ENCODE measurements at regions of chr6 and their contacts with region 1.

Region 1: DNA sequence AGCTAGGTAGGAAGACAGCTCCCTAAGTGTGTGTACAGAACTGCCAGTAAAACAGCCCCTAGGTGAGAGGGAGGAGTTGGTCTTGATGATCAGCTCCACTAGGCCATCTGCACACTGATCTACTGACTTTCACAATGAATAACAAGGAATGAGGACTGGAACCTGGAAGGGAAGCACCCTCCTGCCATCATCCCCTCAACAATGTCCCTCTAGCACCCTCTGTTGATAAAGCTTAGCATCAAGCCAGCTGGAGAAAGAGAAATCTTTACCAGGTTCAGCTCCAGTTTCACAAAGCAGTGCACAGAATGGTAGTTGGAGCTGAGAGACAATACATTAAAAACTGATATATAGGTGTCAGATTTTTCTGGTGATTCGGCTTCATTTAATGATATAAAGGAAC is 57.2 kb upstream of the IRAK1BP1 start:
- DNase-seq: peak in 1 of 2 experiments; percentile 22
- H3K4me3 ChIP-seq: no peak overlapping the region
- H3K27ac ChIP-seq: no peak overlapping the region
- H3K4me1 ChIP-seq: no peaks in the 10 kb centered on the region
- H3K27me3 ChIP-seq: no peaks in the 10 kb centered on the region
- CTCF ChIP-seq: peak; percentile 52; the same call in 1 of the 2 replicates

Region 2: DNA sequence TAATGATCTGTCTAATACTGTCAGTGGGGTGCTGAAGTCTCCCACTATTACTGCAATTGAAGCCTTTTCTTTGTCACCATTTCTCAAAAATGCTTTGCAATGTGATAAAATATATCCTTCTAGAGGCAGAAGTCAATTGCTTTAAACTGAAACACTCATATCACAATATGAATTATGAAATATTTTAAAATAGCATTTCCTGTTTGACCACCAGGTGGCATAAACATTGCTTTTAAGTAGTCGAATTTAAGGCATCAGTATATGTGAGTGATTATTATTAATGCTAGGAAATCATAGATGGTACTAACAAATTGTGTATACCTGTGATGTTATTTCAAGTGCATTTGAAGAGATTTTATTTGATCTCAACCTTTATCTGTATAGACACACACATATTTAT is 1069.8 kb before region 1 on chr6:
- CTCF ChIA-PET with region 1: no interaction called
- POLR2A ChIA-PET with region 1: no interaction called
- intact Hi-C with region 1: loop called (anchors 2 kb)
- DNase-seq: peak in 1 of 2 experiments; percentile 35
- H3K4me3 ChIP-seq: no peak overlapping the region
- H3K27ac ChIP-seq: no peak overlapping the region
- H3K4me1 ChIP-seq: no peaks in the 10 kb centered on the region
- H3K27me3 ChIP-seq: no peaks in the 10 kb centered on the region
- CTCF ChIP-seq: peak; percentile 61

Region 3: GRCh38 chr6:78436335-78436734 is 373.8 kb before region 1 on chr6:
- CTCF ChIA-PET with region 1: no interaction called
- POLR2A ChIA-PET with region 1: no interaction called
- intact Hi-C with region 1: loop called (anchors 1 kb)
- DNase-seq: no peak
- H3K4me3 ChIP-seq: no peak overlapping the region
- H3K27ac ChIP-seq: no peak overlapping the region
- H3K4me1 ChIP-seq: no peaks in the 10 kb centered on the region
- H3K27me3 ChIP-seq: no peaks in the 10 kb centered on the region
- CTCF ChIP-seq: peak; percentile 44